ENCODE measurements at regions of chr20 and their contacts with region 1.

Region 1: DNA sequence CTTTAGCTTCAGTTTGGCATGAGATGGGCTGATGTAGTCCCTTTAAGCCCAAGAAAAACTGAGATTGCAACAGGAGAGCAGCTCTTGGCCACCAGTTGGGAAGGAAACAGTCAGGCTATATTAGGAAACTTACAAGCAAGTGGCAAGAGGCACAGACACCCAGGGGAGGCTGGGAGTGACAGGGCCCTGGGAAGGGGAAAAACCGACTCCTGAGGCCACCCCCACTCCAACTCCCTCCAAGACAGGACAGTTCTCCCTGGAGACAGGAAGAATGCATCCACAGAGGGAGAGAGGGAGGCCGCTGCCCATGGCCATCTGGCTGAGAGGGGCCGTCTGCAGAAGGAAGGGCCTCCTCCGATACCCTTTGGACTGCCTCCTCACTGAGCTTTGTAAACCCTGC is 20.5 kb downstream of the JPH2 start:
- DNase-seq: peak; percentile 82
- ATAC-seq: peak; percentile 75
- H3K4me3 ChIP-seq: peak overlapping the region; percentile 42
- H3K27ac ChIP-seq: peak overlapping the region; percentile 94
- H3K4me1 ChIP-seq: peaks cover 65% of the 10 kb centered on the region
- H3K27me3 ChIP-seq: no peaks in the 10 kb centered on the region
- CTCF ChIP-seq: no peak

Region 2: DNA sequence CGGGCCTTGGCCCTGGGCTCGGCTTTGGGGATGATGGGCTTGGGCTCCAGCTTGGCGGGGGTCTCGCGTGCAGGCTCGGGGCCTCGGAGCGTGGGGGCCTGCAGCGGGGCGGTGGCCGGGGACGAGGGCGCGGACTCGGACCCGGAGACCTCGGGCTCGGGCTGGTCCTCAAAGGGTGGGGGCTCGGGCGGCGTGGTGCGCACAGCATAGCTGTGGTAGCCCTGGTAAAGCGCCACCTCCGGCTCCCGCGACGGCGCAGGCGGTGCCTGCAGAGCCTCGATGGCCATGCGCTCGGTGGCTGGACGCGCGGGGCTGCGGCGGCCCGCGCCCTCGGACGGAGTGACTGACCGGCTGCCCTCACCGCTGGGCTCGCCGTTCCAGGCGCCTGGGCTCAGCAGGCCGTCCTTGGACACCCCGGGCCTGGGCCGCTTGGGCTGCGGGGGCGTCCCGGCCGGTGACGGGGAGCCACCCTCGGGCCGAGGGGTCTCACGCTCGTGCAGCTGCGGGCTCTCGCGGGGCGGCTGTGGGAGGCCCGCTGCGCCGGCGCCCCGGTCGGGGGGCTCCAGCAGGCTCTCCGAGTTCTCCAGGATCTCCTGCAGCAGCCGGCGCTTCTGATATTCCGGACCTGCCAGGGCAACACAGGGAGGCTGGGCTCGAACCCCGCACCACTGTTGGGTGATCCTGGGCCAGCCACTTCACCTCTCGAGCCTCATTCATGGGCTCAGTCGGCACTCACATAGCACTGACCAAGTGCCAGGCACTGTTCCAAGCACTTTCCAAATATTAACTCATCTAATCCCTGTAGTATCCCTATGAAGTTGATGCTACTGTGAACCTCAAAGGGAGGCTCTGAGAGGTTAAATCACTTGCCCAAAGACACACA is 50.5 kb before region 1 on chr20:
- CTCF ChIA-PET with region 1: interaction called, 8 read pairs
- POLR2A ChIA-PET with region 1: no interaction called
- intact Hi-C with region 1: loop called (anchors 1 kb)
- DNase-seq: no peak
- ATAC-seq: peak; percentile 16; the same call in 1 of the 2 replicates
- H3K4me3 ChIP-seq: no peak overlapping the region
- H3K27ac ChIP-seq: no peak overlapping the region
- H3K4me1 ChIP-seq: peaks cover 11% of the 10 kb centered on the region; the same call in 1 of the 2 replicates
- H3K27me3 ChIP-seq: no peaks in the 10 kb centered on the region
- CTCF ChIP-seq: no peak

Region 3: DNA sequence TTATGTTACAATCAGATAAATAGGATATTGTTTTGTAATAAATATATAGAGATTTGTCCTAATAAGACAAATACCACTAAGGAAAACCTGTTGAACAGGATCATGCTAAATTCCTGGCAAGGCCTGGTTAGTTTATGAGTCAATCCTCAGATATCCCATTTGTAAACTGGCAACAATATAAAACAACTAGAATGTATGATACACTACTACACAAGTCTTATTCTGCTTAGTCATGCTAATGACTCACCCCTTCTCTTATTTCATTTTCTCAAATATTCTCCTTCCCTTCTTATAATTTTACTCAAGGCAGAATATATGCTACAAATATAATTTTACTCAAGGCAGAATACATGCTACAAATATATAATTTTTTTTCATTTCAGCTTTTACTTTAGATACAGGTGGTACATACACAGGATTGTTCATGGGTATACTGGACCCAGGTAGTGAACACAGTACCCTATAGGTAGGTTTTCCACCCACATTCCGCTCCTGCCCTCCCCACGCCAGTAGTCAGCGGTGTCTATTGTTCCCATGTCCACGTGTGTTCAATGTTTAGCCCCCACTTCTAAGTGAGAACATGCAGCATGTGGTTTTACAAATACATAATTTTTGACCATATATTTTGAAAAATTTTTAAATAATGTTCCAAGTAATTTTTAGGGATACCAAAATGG is 37.8 kb after region 1 on chr20:
- CTCF ChIA-PET with region 1: no interaction called
- POLR2A ChIA-PET with region 1: no interaction called
- intact Hi-C with region 1: loop called (anchors 5 kb)
- DNase-seq: peak; percentile 99
- ATAC-seq: peak; percentile 88
- H3K4me3 ChIP-seq: peak overlapping the region; percentile 56
- H3K27ac ChIP-seq: peak overlapping the region; percentile 91
- H3K4me1 ChIP-seq: peaks cover 68% of the 10 kb centered on the region
- H3K27me3 ChIP-seq: no peaks in the 10 kb centered on the region
- CTCF ChIP-seq: no peak

Region 4: DNA sequence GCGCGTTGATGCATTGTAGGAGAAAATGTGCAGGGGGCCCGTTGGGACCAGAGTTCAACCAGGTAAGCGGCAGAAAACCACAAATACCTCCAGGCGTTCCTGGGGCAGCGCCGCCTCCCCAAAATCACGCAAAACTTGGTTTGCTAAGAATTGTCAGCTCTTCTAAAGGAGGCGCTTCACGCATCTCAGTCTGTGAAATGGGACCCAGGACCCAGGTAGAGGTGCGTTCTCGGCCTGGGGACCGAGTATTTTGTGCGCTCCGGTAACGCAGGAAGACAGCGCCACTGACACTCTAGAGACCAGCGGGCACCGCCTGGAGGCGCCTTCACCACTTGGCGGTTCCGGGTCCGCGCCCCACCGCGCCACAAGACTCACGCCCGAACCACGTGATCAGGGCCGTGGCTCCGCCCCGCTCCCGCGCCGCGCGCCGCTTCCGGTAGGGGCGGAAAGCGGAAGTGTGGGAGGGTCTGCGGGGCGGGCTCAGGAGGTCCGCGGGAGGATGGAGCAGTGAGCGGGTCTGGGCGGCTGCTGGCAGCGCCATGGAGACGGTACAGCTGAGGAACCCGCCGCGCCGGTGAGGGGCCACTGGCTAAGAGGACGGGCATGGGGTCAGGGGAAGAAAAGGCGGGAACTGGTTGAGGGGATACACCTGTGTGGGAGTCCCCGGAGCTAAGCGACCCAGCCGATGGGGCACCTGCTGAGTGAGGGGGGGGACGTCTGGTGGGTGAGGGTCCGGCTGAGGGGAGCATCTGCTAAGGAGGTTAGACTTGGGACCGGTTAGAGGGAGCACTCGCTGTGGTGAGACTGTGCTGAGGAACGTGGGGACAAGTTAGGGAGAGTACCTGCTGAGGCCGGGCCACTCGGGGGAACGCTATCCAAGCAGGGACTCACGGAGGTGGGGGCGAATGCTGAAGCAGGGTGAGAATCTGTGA is 799.8 kb after region 1 on chr20 and contains the start of gene STK4:
- CTCF ChIA-PET with region 1: no interaction called
- POLR2A ChIA-PET with region 1: no interaction called
- intact Hi-C with region 1: no loop called
- DNase-seq: peak; percentile 98
- ATAC-seq: peak; percentile 85
- H3K4me3 ChIP-seq: peak within 1 kb of the TSS; percentile 96
- H3K27ac ChIP-seq: peak within 1 kb of the TSS; percentile 49
- H3K4me1 ChIP-seq: peaks cover 42% of the 10 kb centered on the region
- H3K27me3 ChIP-seq: no peaks in the 10 kb centered on the region
- CTCF ChIP-seq: peak; percentile 70
- total RNA-seq, gene STK4: 18.6 and 20.6 TPM in 2 replicates